MCF 10A (cell line): ENCODE measurements at regions of chr2 and their contacts with region 1.

Region 1: GRCh38 chr2:210195101-210195852 is 24.1 kb upstream of the KANSL1L start:
- DNase-seq: peak; percentile 43
- H3K4me3 Mint-ChIP-seq: no peak overlapping the region
- H3K27ac Mint-ChIP-seq: no peak overlapping the region
- H3K4me1 Mint-ChIP-seq: peaks cover 6% of the 10 kb centered on the region
- H3K27me3 Mint-ChIP-seq: no peaks in the 10 kb centered on the region
- CTCF ChIP-seq: peak; percentile 53

Region 2: GRCh38 chr2:209441541-209441940 is 753.7 kb before region 1 on chr2:
- CTCF ChIA-PET with region 1: no interaction called
- POLR2A ChIA-PET with region 1: no interaction called
- intact Hi-C with region 1: no loop called
- DNase-seq: no peak
- H3K4me3 Mint-ChIP-seq: no peak overlapping the region
- H3K27ac Mint-ChIP-seq: no peak overlapping the region
- H3K4me1 Mint-ChIP-seq: peaks cover 7% of the 10 kb centered on the region
- H3K27me3 Mint-ChIP-seq: no peaks in the 10 kb centered on the region
- CTCF ChIP-seq: no peak

Region 3: DNA sequence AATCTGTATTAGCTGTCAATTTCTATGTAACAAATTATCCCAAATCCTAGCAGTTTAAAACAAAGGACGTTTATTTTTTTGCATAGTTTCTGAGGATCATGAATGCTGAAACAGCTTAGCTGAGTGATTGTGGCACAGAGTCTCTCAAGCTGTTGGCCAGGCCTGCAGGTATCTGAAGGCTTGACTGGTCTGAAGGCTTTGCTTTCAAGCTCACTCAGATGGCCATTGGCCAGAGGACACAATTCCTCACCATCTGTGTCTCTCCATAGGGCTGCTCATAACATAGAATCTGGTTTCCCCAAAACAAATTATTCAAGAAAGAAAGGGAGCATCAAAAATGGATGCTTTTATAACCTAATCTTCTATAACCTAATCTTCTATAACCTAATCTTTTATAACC is 389.9 kb before region 1 on chr2:
- CTCF ChIA-PET with region 1: no interaction called
- POLR2A ChIA-PET with region 1: no interaction called
- intact Hi-C with region 1: no loop called
- DNase-seq: no peak
- H3K4me3 Mint-ChIP-seq: no peak overlapping the region
- H3K27ac Mint-ChIP-seq: no peak overlapping the region
- H3K4me1 Mint-ChIP-seq: no peaks in the 10 kb centered on the region
- H3K27me3 Mint-ChIP-seq: no peaks in the 10 kb centered on the region
- CTCF ChIP-seq: no peak

Region 4: DNA sequence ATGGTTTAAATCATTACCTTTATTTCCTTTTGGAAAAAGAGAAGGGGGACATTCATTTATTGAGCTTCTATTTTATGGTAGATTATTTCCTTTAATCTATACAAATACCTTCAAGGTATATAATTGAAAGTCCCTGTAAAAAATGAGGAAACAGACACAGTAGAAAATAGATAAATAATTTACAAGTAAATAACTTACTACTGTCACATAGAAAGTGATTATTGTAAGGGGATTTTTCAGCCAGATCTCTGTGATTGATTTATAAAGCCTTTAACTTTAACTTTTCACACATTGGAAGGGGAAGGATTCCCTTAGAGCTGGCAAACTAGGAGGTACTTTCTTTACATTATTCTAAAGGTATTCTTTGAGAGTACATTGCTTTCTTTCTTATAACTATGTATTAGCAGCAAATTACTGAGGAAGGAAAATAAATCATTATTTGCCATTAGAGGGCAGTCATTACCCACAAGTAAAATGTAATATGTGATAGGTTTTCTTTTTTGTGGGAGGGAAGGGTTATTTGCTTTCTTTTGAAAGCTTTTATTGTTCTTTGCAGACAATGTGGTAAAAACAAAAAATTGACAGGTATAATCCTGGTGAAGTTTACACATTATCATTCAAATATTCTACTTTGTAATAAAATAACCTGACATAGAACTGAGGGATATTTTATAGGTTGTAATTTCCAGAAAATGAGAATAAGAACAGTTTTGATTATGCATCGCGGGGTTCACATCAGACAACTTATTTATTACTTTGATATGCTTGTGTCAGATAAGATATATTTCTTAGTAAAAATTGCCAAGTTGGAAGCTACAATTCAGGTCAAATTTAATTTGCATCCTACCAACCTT is 217.7 kb before region 1 on chr2:
- CTCF ChIA-PET with region 1: interaction called, 126 read pairs
- POLR2A ChIA-PET with region 1: no interaction called
- intact Hi-C with region 1: loop called (anchors 1 kb)
- DNase-seq: peak; percentile 47
- H3K4me3 Mint-ChIP-seq: no peak overlapping the region
- H3K27ac Mint-ChIP-seq: no peak overlapping the region
- H3K4me1 Mint-ChIP-seq: no peaks in the 10 kb centered on the region
- H3K27me3 Mint-ChIP-seq: no peaks in the 10 kb centered on the region
- CTCF ChIP-seq: peak; percentile 39

Region 5: DNA sequence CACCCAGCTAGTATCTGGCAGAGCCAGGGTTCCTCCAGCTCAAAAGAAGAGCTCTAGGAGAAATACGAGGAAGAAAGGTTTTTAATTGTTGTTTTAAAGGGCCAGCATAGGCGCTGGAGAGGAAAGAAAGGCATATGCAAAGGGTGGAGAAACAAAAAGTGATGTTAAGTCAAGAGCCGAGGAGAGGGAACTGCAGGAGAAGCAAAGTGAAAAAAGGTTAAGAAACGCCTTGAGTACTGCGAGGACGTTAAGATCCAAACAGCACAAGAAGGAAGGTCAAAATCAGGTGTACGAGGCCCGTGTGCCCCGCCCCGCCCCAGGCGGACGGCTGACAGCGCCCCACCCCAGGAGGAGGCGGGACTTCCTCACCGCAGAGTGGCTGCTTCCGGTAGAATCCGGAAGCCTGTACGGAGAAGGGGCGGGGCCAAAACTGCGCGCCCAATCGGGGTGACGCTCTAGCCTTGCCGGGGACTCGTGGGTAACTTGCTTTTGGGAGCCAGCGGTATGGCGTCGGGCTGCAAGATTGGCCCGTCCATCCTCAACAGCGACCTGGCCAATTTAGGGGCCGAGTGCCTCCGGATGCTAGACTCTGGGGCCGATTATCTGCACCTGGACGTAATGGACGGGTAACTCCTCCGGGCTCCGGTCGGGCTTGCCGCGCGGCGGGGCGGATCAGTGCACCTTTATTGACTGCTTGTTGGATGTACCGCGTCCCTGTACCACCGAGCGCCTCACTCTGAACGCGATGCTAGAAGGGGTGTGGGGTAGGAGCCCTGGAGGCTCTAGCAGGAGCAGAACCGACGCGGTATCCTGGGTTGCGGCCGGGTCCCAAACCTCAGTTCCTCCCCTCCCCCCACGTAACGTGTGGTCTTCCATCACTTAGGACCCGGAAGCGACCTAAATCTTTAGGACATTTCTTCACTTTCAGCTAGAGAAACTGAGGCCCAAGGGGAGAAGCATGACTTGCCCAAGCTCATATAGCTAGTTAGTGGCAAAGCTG is 192.8 kb before region 1 on chr2 and contains the start of gene RPE:
- CTCF ChIA-PET with region 1: interaction called, 11 read pairs
- POLR2A ChIA-PET with region 1: no interaction called
- intact Hi-C with region 1: no loop called
- DNase-seq: peak; percentile 96
- H3K4me3 Mint-ChIP-seq: peak within 1 kb of the TSS; percentile 91
- H3K27ac Mint-ChIP-seq: peak within 1 kb of the TSS; percentile 91
- H3K4me1 Mint-ChIP-seq: peaks cover 34% of the 10 kb centered on the region
- H3K27me3 Mint-ChIP-seq: no peaks in the 10 kb centered on the region
- CTCF ChIP-seq: no peak
- total RNA-seq, gene RPE: 90.6 and 92.1 TPM in 2 replicates

Region 6: GRCh38 chr2:210128961-210129360 is 66.3 kb before region 1 on chr2:
- CTCF ChIA-PET with region 1: no interaction called
- POLR2A ChIA-PET with region 1: no interaction called
- intact Hi-C with region 1: no loop called
- DNase-seq: no peak
- H3K4me3 Mint-ChIP-seq: no peak overlapping the region
- H3K27ac Mint-ChIP-seq: no peak overlapping the region
- H3K4me1 Mint-ChIP-seq: no peaks in the 10 kb centered on the region
- H3K27me3 Mint-ChIP-seq: no peaks in the 10 kb centered on the region
- CTCF ChIP-seq: no peak

Region 7: DNA sequence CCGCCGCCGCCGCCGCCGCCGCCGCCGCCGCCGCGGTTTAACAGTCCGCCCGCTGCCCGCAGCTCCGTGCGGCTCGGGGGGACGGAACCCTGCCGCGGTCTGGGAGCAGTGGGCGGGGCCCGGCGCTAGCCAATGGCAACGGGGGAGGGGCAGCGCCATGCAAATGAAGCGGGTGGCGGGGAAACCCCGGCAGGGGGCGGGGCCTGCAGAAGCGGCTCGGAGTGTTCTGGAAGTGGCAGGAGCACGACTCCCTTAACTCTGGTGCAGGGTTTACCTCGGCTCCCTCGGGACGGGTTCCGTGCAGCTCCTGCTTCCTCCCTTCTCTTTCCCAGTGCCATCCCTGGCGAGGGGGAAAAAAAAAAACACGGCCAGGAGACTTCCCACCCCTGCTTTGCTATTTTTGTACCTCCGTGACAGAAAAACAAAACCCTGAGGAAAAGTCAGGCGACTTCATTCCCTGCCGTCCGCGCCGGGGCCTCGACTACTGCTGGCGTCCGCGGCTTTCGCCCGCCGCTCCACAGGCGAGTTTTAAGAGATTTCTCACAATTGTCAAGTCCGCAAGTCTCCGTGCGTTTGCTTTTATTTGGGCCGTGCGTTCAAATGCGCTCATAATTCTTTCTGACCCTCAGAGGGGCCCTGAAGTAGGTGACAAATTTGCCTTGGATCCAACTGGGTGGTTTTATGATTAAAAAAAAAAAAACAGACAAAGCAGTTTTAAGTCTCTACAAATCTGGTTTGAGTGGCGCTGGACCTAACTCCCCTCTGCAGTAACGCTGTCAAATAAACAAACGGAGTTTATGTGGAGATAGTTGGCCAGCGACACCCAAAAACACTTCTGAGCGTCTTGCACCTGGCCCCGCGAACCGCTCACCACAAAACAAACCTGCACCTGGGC is 23.7 kb before region 1 on chr2 and contains the start of gene KANSL1L:
- CTCF ChIA-PET with region 1: interaction called, 13 read pairs
- POLR2A ChIA-PET with region 1: interaction called, 5 read pairs
- intact Hi-C with region 1: no loop called
- DNase-seq: peak; percentile 96
- H3K4me3 Mint-ChIP-seq: peak within 1 kb of the TSS; percentile 99
- H3K27ac Mint-ChIP-seq: peak within 1 kb of the TSS; percentile 99
- H3K4me1 Mint-ChIP-seq: peaks cover 27% of the 10 kb centered on the region
- H3K27me3 Mint-ChIP-seq: no peaks in the 10 kb centered on the region
- CTCF ChIP-seq: no peak
- total RNA-seq, gene KANSL1L: 7.4 and 9.8 TPM in 2 replicates